Dorsolateral prefrontal cortex (tissue), 120 donors: ENCODE measurements at regions of chr3 and their contacts with region 1.

Region 1: DNA sequence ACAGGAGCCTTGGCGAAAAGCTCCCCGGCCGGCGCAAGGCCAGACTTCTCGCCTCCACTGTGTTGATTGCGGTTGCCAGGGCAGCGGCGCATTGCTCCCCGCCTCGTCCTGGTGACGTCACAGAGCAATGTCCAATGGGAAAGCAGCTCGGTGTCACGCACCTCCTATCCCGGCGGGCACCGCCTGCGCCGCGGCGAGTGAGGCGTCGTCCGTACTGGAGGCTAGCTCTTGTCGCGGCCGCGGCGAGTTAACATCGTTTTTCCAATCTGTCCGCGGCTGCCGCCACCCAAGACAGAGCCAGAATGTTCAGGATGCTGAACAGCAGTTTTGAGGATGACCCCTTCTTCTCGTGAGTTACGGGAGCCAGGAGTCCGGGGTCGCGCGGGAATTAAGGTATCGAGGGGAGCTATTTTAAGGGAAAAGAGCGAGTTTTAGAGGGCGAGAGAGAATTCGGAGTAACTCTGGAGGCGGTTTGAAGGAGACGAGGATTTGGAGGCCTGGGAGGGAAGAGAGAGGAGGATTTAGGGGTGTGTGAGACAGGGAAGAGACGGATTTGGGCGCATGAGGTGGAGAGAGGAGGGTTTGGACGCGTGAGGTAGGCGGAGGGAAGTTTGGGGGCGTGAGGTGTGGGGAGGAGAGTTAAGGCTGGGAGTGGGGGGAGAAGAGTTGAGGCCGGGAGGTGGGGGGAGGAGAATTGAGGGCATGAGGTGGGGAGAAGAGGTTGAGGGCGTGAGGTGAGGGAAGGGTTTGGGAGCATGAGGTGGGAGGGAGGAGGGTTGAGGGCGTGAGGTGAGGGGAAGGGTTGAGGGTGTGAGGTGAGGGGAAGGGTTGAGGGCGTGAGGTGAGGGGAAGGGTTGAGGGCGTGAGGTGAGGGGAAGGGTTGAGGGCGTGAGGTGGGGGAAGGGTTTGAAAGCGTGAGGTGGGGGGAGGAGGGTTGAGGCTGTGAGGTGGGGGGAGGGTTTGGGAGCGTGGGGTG is at the start of gene MLF1:
- DNase-seq: peak; percentile 94 to 99 (median 97)
- H3K4me3 ChIP-seq: peak within 1 kb of the TSS; percentile 52 to 96 (median 83)
- H3K27ac ChIP-seq: peak within 1 kb of the TSS in 26 of 59 donors; percentile 11 to 83 (median 59)
- H3K27me3 ChIP-seq: no peaks in the 10 kb centered on the region
- CTCF ChIP-seq: peak in 18 of 56 donors; percentile 10 to 42 (median 24)
- total RNA-seq, gene MLF1: 7.3 to 35.8 (median 16.8) TPM

Region 2: GRCh38 chr3:158644345-158644908 is 73.1 kb after region 1 on chr3 and contains the start of gene GFM1:
- intact Hi-C with region 1: loop called in 1 of 2 experiments (anchors 5 kb)
- DNase-seq: peak; percentile 81 to 95 (median 93)
- H3K4me3 ChIP-seq: peak within 1 kb of the TSS; percentile 60 to 100 (median 90)
- H3K27ac ChIP-seq: peak within 1 kb of the TSS in 57 of 59 donors; percentile 23 to 97 (median 85)
- H3K27me3 ChIP-seq: no peaks in the 10 kb centered on the region
- CTCF ChIP-seq: peak; percentile 89 to 99 (median 97)
- total RNA-seq, gene GFM1: 47.9 to 82.8 (median 61.3) TPM